Calu3 (cell line): ENCODE measurements at regions of chr9 and their contacts with region 1.

Region 1: DNA sequence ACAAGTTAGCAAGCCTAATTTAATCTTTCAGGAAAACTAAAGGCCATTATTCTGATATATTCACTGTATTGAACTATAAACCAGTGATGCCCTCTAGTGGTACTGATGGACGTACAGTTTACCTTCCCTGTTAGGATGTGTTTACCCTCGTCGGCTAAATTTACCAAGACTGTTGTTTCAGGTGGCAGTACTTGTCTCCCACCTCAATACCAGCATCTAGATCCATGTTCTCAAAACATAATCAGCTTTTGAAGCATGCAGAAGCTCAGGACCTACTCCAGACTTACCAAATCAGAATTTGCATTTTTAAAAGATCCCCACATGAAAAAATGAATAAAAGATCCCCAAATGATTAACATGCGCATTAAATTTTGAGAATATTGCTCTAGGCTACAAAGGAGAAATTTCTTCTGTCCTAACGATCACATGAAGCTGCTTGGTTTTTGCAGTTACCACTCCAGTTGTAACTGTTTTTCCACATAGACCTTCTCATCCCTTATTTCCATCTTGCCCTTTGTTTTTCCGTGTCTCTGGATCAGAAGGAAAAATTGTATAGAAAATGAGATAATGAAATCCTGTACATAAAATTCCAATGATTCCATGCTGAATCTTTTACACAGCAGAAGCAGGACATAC is 3.2 kb upstream of the BAAT start:
- DNase-seq: peak; percentile 34
- H3K4me3 Mint-ChIP-seq: no peak overlapping the region
- H3K27ac Mint-ChIP-seq: peak overlapping the region; percentile 69
- H3K4me1 Mint-ChIP-seq: peaks cover 38% of the 10 kb centered on the region
- H3K27me3 Mint-ChIP-seq: no peaks in the 10 kb centered on the region
- CTCF ChIP-seq: peak; percentile 19

Region 2: GRCh38 chr9:101119206-101119819 is 268.7 kb before region 1 on chr9:
- CTCF ChIA-PET with region 1: interaction called, 13 read pairs
- intact Hi-C with region 1: loop called (anchors 1 kb)
- DNase-seq: peak; percentile 76
- H3K4me3 Mint-ChIP-seq: no peak overlapping the region
- H3K27ac Mint-ChIP-seq: no peak overlapping the region
- H3K4me1 Mint-ChIP-seq: no peaks in the 10 kb centered on the region
- H3K27me3 Mint-ChIP-seq: peaks cover 33% of the 10 kb centered on the region
- CTCF ChIP-seq: peak; percentile 69

Region 3: GRCh38 chr9:101311758-101312420 is 76.1 kb before region 1 on chr9:
- CTCF ChIA-PET with region 1: interaction called, 5 read pairs
- intact Hi-C with region 1: loop called (anchors 1 kb)
- DNase-seq: peak; percentile 15
- H3K4me3 Mint-ChIP-seq: no peak overlapping the region
- H3K27ac Mint-ChIP-seq: no peak overlapping the region
- H3K4me1 Mint-ChIP-seq: peaks cover 18% of the 10 kb centered on the region
- H3K27me3 Mint-ChIP-seq: peaks cover 14% of the 10 kb centered on the region
- CTCF ChIP-seq: peak; percentile 45

Region 4: GRCh38 chr9:101354143-101354764 is 33.7 kb before region 1 on chr9:
- CTCF ChIA-PET with region 1: no interaction called
- intact Hi-C with region 1: loop called (anchors 5 kb)
- DNase-seq: peak; percentile 32
- H3K4me3 Mint-ChIP-seq: peak overlapping the region; percentile 5
- H3K27ac Mint-ChIP-seq: peak overlapping the region; percentile 33
- H3K4me1 Mint-ChIP-seq: peaks cover 33% of the 10 kb centered on the region
- H3K27me3 Mint-ChIP-seq: no peaks in the 10 kb centered on the region
- CTCF ChIP-seq: no peak

Region 5: DNA sequence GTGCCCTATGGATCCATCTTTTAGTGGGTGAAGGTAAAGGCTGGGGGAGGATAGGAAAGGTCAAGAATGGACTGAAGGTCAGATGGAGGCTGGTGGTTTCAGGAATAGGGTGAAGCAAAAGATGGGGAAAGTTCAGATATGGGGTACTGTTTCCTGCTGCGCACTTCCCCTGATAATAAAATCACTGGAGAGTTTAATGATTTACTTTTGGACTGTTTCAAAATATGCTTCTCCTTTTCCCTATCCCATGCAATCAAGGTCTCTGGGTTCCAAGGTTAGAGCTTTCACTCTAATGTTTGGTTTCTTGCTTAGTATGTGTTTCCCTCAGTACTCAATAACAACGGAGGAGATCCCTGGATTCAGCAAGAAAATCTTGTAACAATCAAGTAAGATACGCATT is 217.6 kb after region 1 on chr9:
- CTCF ChIA-PET with region 1: no interaction called
- intact Hi-C with region 1: no loop called
- DNase-seq: no peak
- H3K4me3 Mint-ChIP-seq: no peak overlapping the region
- H3K27ac Mint-ChIP-seq: no peak overlapping the region
- H3K4me1 Mint-ChIP-seq: no peaks in the 10 kb centered on the region
- H3K27me3 Mint-ChIP-seq: peaks cover 12% of the 10 kb centered on the region
- CTCF ChIP-seq: no peak